A673 (cell line): ENCODE measurements at regions of chr16 and their contacts with region 1.

Region 1: DNA sequence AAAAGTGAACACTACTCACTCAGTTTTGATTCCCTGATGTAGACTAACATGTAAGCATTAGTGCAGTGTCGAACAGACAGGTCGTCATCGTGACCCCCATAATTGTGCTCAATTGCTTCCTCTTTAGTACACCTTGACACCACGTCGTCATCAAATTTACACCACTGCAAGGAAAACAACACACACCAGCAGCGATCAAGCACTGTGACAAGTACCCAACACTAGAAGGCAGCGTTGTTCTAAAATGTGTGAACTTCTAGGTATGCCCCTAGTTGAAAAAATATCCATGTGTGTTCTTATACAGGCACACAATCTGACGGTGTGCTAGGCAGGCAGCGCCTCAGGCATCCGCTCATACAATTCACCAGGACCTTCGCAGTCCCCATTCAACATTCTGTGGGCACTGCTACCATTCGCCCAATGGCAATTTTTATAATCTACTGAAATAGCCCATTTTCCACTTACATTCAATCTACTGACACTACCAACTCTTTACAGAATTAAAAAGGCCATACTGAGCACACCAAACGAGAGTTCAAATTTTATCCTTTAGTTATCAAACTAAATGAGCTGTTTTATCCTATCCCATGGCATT is 23.1 kb downstream of the LITAFD start:
- DNase-seq: peak; percentile 63
- H3K4me3 ChIP-seq: no peak overlapping the region
- H3K27ac ChIP-seq: no peak overlapping the region
- H3K4me1 ChIP-seq: no peaks in the 10 kb centered on the region
- H3K27me3 ChIP-seq: no peaks in the 10 kb centered on the region
- CTCF ChIP-seq: peak; percentile 68

Region 2: GRCh38 chr16:9008601-9009260 is 103.5 kb after region 1 on chr16:
- CTCF ChIA-PET with region 1: interaction called, 4 read pairs
- POLR2A ChIA-PET with region 1: no interaction called
- intact Hi-C with region 1: loop called (anchors 1 kb)
- DNase-seq: peak; percentile 80
- H3K4me3 ChIP-seq: peak overlapping the region; percentile 33
- H3K27ac ChIP-seq: no peak overlapping the region
- H3K4me1 ChIP-seq: no peaks in the 10 kb centered on the region
- H3K27me3 ChIP-seq: no peaks in the 10 kb centered on the region
- CTCF ChIP-seq: peak; percentile 90

Region 3: GRCh38 chr16:9033125-9033830 is 128.0 kb after region 1 on chr16:
- CTCF ChIA-PET with region 1: no interaction called
- POLR2A ChIA-PET with region 1: no interaction called
- intact Hi-C with region 1: no loop called
- DNase-seq: peak; percentile 82
- H3K4me3 ChIP-seq: no peak overlapping the region
- H3K27ac ChIP-seq: no peak overlapping the region
- H3K4me1 ChIP-seq: no peaks in the 10 kb centered on the region
- H3K27me3 ChIP-seq: no peaks in the 10 kb centered on the region
- CTCF ChIP-seq: peak; percentile 66

Region 4: GRCh38 chr16:9119795-9120194 is 214.5 kb after region 1 on chr16:
- CTCF ChIA-PET with region 1: no interaction called
- POLR2A ChIA-PET with region 1: no interaction called
- intact Hi-C with region 1: loop called (anchors 10 kb)
- DNase-seq: no peak
- H3K4me3 ChIP-seq: no peak overlapping the region
- H3K27ac ChIP-seq: no peak overlapping the region
- H3K4me1 ChIP-seq: peaks cover 9% of the 10 kb centered on the region
- H3K27me3 ChIP-seq: no peaks in the 10 kb centered on the region
- CTCF ChIP-seq: no peak